Naive thymus-derived CD4-positive, alpha-beta T cell (primary cell): ENCODE measurements at regions of chr7 and their contacts with region 1.

Region 1: DNA sequence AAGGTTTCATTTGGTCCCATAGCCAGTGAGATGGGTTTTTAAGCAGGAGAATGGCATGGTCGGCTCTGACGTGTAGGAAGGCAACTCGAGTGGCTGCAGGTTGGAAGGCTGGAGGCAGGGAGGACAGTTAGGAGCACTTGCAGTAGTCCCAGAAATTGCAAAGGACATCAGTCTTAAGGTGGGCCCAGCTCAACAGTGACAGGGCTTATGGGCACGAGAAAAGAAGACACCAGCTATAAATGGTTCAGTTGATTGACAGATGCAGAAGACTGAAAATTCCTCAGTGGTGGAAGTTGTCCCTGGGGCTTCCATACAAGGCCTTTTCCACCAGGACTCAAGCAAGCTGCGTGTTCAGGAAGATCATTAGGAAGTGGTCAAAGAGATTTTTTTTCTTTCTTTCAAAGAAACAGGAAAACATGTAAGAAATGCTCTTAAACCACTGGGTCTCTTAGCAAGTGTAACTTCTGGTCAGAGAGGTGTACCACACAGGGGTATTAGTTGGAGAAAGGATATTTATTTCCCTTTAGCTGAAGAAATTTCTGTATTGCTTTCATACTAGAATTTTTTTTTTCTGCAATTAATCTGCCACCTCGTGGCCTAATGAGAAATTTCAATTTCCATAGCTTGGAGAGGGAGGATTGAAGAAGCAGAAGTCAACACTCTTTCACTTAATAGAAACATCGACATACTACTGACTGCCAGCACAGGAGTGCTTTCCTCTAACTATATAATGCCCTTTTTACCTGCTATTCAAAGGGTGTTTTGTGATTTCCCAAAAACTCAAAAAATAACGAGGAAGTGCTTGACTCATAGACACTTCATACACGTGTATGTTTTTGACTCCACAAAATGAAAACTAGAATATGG is 177.4 kb upstream of the NAMPT start:
- DNase-seq: peak in 5 of 9 donors; percentile 11 to 32 (median 14)
- ATAC-seq: peak; percentile 51
- H3K4me3 ChIP-seq: no peak overlapping the region
- H3K4me3 Mint-ChIP-seq: no peak overlapping the region
- H3K27ac ChIP-seq: no peak overlapping the region
- H3K27ac Mint-ChIP-seq: peak overlapping the region in 1 of 9 donors; percentile 14
- H3K4me1 ChIP-seq: no peaks in the 10 kb centered on the region
- H3K4me1 Mint-ChIP-seq: peaks cover 0 to 14% (median 0%) of the 10 kb centered on the region in 7 donors
- H3K27me3 ChIP-seq: no peaks in the 10 kb centered on the region
- H3K27me3 Mint-ChIP-seq: no peaks in the 10 kb centered on the region

Region 2: DNA sequence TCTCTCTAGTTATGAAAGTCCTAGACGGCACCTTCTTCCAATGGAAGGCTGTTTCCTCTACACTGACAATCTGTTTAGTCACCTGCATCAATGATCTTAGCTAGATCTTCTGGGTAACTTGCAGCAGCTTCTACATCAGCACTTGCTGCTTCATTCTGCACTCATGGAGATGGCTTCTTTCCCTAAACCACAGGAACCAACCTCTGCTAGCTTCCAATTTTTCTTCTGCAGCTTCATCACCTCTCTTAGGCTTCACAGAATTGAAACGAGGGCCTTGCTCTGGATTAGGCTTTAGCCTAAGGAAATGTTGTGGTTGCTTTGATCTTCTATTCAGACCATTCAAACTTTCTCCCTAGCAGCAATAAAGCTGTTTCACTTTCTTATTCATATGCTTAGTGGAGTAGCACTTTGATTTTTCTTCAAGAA is 202.1 kb before region 1 on chr7:
- CTCF ChIA-PET with region 1: no interaction called
- POLR2A ChIA-PET with region 1: no interaction called
- intact Hi-C with region 1: loop called in 1 of 2 experiments (anchors 5 kb)
- DNase-seq: no peak
- ATAC-seq: peak; percentile 1
- H3K4me3 ChIP-seq: no peak overlapping the region
- H3K4me3 Mint-ChIP-seq: peak overlapping the region in 1 of 10 donors; percentile 41
- H3K27ac ChIP-seq: no peak overlapping the region
- H3K27ac Mint-ChIP-seq: peak overlapping the region in 4 of 9 donors; percentile 19 to 60 (median 46)
- H3K4me1 ChIP-seq: peaks cover 0 to 8% of the 10 kb centered on the region in 2 donors
- H3K4me1 Mint-ChIP-seq: peaks cover 10 to 43% (median 15%) of the 10 kb centered on the region in 7 donors
- H3K27me3 ChIP-seq: no peaks in the 10 kb centered on the region
- H3K27me3 Mint-ChIP-seq: no peaks in the 10 kb centered on the region

Region 3: DNA sequence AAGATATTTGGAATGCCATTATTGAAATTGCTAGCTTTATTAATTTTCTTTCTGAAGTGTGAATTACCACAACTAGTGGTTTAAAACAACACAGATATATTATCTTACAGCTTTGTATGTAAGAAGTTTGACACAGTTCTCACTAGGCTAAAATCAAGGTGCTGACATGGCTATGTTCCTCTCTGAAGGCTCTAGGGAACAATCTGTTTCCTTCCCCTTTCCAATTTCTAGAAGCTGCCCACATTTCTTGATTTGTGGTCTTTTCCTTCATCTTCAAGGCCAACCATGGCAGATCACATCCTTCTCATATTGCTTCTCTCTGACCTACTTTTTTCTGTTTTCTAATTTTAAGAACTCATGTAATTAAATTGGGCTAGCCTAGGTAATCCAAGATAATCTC is 1384.1 kb after region 1 on chr7:
- CTCF ChIA-PET with region 1: no interaction called
- POLR2A ChIA-PET with region 1: no interaction called
- intact Hi-C with region 1: no loop called
- DNase-seq: no peak
- ATAC-seq: no peak
- H3K4me3 ChIP-seq: no peak overlapping the region
- H3K4me3 Mint-ChIP-seq: no peak overlapping the region
- H3K27ac ChIP-seq: no peak overlapping the region
- H3K27ac Mint-ChIP-seq: no peak overlapping the region
- H3K4me1 ChIP-seq: no peaks in the 10 kb centered on the region
- H3K4me1 Mint-ChIP-seq: no peaks in the 10 kb centered on the region
- H3K27me3 ChIP-seq: no peaks in the 10 kb centered on the region
- H3K27me3 Mint-ChIP-seq: peaks cover 0 to 4% (median 0%) of the 10 kb centered on the region in 5 donors